CD4-positive, alpha-beta T cell (primary cell): ENCODE measurements at regions of chr6 and their contacts with region 1.

Region 1: DNA sequence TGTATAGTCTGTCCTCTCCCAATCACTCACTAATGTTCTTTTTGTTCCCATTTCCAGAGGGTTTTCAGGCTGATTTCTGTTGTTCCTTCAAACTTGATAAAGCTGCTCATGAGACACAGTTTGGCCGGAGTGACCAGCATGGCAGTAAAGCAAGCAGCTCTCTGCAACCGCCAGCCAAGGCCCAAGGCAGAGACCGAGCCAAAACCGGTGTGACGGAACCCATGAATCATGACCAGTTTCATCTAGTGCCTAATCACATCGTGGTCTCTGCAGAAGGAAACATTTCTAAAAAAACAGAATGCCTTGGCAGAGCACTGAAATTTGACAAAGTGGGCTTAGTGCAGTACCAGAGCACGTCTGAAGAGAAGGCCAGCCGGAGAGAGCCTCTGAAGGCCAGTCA is 14.8 kb upstream of the RPL7L1 start:
- DNase-seq: no peak
- ATAC-seq: no peak
- H3K4me3 ChIP-seq: no peak overlapping the region
- H3K4me3 Mint-ChIP-seq: no peak overlapping the region
- H3K27ac ChIP-seq: peak overlapping the region in 1 of 2 donors; percentile 10
- H3K27ac Mint-ChIP-seq: no peak overlapping the region
- H3K4me1 ChIP-seq: no peaks in the 10 kb centered on the region
- H3K4me1 Mint-ChIP-seq: no peaks in the 10 kb centered on the region
- H3K27me3 ChIP-seq: no peaks in the 10 kb centered on the region
- H3K27me3 Mint-ChIP-seq: no peaks in the 10 kb centered on the region
- CTCF ChIP-seq: no peak

Region 2: GRCh38 chr6:42813906-42814444 is 50.6 kb before region 1 on chr6:
- CTCF ChIA-PET with region 1: no interaction called
- POLR2A ChIA-PET with region 1: no interaction called
- intact Hi-C with region 1: loop called in 1 of 2 experiments (anchors 5 kb)
- DNase-seq: no peak
- ATAC-seq: no peak
- H3K4me3 ChIP-seq: no peak overlapping the region
- H3K4me3 Mint-ChIP-seq: no peak overlapping the region
- H3K27ac ChIP-seq: no peak overlapping the region
- H3K27ac Mint-ChIP-seq: peak overlapping the region; percentile 39
- H3K4me1 ChIP-seq: no peaks in the 10 kb centered on the region
- H3K4me1 Mint-ChIP-seq: peaks cover 27% of the 10 kb centered on the region
- H3K27me3 ChIP-seq: no peaks in the 10 kb centered on the region
- H3K27me3 Mint-ChIP-seq: no peaks in the 10 kb centered on the region
- CTCF ChIP-seq: no peak

Region 3: GRCh38 chr6:42819803-42820511 is 44.6 kb before region 1 on chr6:
- CTCF ChIA-PET with region 1: no interaction called
- POLR2A ChIA-PET with region 1: no interaction called
- intact Hi-C with region 1: loop called in 1 of 2 experiments (anchors 5 kb)
- DNase-seq: peak in 5 of 14 experiments; percentile 1 to 51 (median 35)
- ATAC-seq: peak; percentile 78
- H3K4me3 ChIP-seq: no peak overlapping the region
- H3K4me3 Mint-ChIP-seq: no peak overlapping the region
- H3K27ac ChIP-seq: no peak overlapping the region
- H3K27ac Mint-ChIP-seq: peak overlapping the region; percentile 86
- H3K4me1 ChIP-seq: peaks cover 7% of the 10 kb centered on the region
- H3K4me1 Mint-ChIP-seq: peaks cover 39% of the 10 kb centered on the region
- H3K27me3 ChIP-seq: no peaks in the 10 kb centered on the region
- H3K27me3 Mint-ChIP-seq: no peaks in the 10 kb centered on the region
- CTCF ChIP-seq: no peak